ENCODE measurements at regions of chr12 and their contacts with region 1.

Region 1: DNA sequence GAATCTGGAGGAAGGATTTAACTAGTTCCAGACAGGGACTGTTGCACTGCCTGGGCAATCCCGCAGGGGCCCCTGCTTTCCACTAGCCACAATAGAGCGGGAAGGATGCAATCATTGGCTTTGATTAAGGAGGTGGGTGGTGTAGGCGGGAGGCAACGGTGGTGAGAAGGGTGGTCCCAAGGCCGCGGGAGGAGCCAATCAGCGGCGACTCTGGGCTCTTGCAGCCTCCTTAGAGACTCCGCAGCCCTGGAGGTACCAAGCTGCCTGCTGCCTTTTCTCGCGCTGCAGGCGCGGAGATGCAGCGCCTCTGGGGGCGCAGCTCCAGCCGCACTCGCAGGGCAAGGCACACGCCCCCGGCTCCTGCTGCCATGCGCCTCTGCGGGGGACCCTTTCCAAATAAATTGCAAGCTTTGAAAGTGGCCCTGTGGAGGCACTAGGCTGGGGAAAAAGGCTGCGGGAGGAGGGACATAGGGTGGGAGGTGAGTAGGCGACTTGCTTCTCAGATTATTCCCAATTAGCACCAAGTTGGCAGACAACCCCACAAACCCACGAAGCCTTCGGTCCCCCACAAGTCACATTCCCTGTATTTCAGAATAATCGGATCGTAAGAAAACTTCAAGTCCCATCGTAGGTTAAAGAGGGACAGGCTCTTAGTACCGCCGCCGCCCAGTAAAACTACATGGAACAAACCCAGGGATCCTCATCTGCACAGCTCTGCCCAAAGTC is 858 bp upstream of the KCNA1 start:
- DNase-seq: no peak
- H3K4me3 Mint-ChIP-seq: peak overlapping the region; percentile 6
- H3K27ac Mint-ChIP-seq: no peak overlapping the region
- H3K4me1 Mint-ChIP-seq: peaks cover 8% of the 10 kb centered on the region
- H3K27me3 Mint-ChIP-seq: peaks cover 50% of the 10 kb centered on the region

Region 2: DNA sequence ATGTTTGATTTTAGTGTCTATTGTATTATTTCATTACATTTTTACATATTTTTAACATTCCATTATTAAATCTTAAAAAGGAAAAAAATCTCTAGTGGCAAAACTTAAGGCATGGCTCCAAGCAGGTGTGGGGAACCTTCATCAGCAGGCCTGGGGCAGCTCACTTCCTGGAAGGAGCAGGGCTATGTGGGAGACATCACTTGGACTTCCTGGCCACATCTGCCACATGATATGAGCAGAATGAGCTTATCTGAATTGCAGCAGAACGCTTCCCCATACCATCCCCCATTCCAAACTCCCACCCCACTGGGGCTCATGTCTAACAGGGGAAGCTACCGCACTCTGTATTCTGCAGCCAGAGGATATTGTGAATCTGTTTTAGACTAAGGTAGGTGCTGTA is 34.2 kb before region 1 on chr12:
- intact Hi-C with region 1: loop called (anchors 1 kb)
- DNase-seq: no peak
- H3K4me3 Mint-ChIP-seq: no peak overlapping the region
- H3K27ac Mint-ChIP-seq: no peak overlapping the region
- H3K4me1 Mint-ChIP-seq: no peaks in the 10 kb centered on the region
- H3K27me3 Mint-ChIP-seq: peaks cover 13% of the 10 kb centered on the region

Region 3: GRCh38 chr12:5047094-5047493 is 138.2 kb after region 1 on chr12:
- intact Hi-C with region 1: no loop called
- DNase-seq: no peak
- H3K4me3 Mint-ChIP-seq: no peak overlapping the region
- H3K27ac Mint-ChIP-seq: no peak overlapping the region
- H3K4me1 Mint-ChIP-seq: peaks cover 3% of the 10 kb centered on the region
- H3K27me3 Mint-ChIP-seq: peaks cover 31% of the 10 kb centered on the region

Region 4: GRCh38 chr12:5364036-5364770 is 455.4 kb after region 1 on chr12:
- intact Hi-C with region 1: no loop called
- DNase-seq: no peak
- H3K4me3 Mint-ChIP-seq: no peak overlapping the region
- H3K27ac Mint-ChIP-seq: no peak overlapping the region
- H3K4me1 Mint-ChIP-seq: no peaks in the 10 kb centered on the region
- H3K27me3 Mint-ChIP-seq: no peaks in the 10 kb centered on the region

Measured in activated T-helper 2 cell treated with anti-CD3 and anti-CD28 coated beads, Interferon-gamma antibody, Interleukin-2, Interleukin-4, amounts not matched to agents 10 μg/mL and 5 μg/mL and 100 μg/mL, durations not matched to agents 14 hours and 24 hours and 36 hours (primary cell).